CD8-positive, alpha-beta T cell (primary cell): ENCODE measurements at regions of chr16 and their contacts with region 1.

Region 1: DNA sequence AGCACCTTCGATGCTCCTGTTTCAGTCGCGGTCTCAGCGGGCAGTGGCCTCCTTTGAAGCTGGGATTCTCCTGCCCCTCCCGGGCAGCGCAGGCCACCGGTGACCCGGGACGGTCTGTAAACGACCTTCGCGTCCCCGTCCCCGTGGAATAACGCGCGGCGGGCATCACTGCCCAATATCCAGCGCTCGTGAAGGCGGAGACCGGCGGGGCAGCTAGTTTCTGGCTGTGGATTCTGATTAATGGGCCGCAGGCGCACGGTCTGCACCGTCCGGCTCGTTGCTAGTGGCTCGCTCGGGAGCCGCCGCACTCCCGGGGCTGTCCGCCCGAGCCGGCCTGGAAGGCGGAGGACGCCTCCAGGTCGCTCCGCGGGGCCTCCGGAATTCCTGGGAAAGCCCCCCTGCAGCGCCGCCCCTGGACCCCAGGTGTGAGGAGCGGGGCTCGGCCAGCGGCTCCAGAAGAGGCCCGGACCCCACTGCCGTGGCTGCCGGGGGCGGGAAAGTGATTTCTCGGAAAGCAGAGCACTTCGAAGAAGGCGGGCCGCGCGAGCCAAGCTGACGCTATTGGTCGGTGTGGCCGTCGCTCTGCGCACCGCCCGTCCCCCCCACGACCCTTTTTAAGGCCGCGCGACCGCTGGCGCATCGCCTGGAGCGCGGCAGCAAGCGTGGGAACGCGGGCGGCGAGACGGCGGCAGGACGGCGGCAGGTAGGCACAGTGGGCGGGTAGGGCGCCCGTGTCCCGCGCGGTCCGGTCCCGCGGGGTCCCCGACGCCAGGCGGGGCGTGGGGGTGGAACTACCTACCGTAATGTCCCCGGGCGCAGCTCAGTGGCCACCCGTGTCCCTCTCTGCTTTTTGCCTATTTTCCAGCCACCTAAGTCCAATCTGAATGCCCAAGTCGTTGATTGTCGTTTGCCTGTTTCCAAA is at the start of gene IRF8:
- DNase-seq: peak; percentile 35 to 89 (median 73)
- ATAC-seq: peak; percentile 77
- H3K4me3 ChIP-seq: peak within 1 kb of the TSS; percentile 54 to 66
- H3K4me3 Mint-ChIP-seq: peak within 1 kb of the TSS; percentile 83
- H3K27ac ChIP-seq: no peak within 1 kb of the TSS
- H3K27ac Mint-ChIP-seq: no peak within 1 kb of the TSS
- H3K4me1 ChIP-seq: peaks cover 35% of the 10 kb centered on the region
- H3K4me1 Mint-ChIP-seq: peaks cover 47% of the 10 kb centered on the region
- H3K27me3 ChIP-seq: peaks cover 0 to 2% of the 10 kb centered on the region in 2 experiments
- H3K27me3 Mint-ChIP-seq: no peaks in the 10 kb centered on the region
- CTCF ChIP-seq: no peak
- total RNA-seq, gene IRF8: 23.0 to 25.5 TPM

Region 2: GRCh38 chr16:84498859-84499620 is 1399.7 kb before region 1 on chr16:
- CTCF ChIA-PET with region 1: no interaction called
- POLR2A ChIA-PET with region 1: no interaction called
- intact Hi-C with region 1: loop called in 1 of 2 experiments (anchors 5 kb)
- DNase-seq: no peak
- ATAC-seq: no peak
- H3K4me3 ChIP-seq: no peak overlapping the region
- H3K4me3 Mint-ChIP-seq: no peak overlapping the region
- H3K27ac ChIP-seq: no peak overlapping the region
- H3K27ac Mint-ChIP-seq: no peak overlapping the region
- H3K4me1 ChIP-seq: peaks cover 5% of the 10 kb centered on the region
- H3K4me1 Mint-ChIP-seq: peaks cover 13% of the 10 kb centered on the region
- H3K27me3 ChIP-seq: no peaks in the 10 kb centered on the region
- H3K27me3 Mint-ChIP-seq: no peaks in the 10 kb centered on the region
- CTCF ChIP-seq: no peak

Region 3: DNA sequence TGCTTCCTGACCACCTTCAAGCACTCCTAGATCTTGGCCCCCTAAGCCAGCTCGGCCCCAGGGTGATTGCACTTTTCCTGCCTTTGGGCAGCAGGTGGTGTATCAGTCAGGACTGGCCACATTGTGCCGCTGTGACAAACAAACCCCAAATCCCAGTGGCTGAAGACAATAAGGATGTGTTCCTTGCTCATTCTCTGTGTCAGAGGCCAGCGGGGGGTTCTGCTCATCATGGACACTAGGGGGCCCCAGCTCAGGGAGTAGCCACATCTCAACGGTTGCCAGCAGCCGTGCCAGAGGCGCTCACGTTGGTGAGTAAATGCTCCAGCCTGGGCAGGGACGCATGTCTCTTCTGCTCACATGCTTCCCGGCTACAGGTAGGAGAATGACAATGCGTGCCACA is 947.9 kb before region 1 on chr16:
- CTCF ChIA-PET with region 1: no interaction called
- POLR2A ChIA-PET with region 1: no interaction called
- intact Hi-C with region 1: no loop called
- DNase-seq: peak in 5 of 9 experiments; percentile 23 to 50 (median 32)
- ATAC-seq: no peak
- H3K4me3 ChIP-seq: no peak overlapping the region
- H3K4me3 Mint-ChIP-seq: no peak overlapping the region
- H3K27ac ChIP-seq: no peak overlapping the region
- H3K27ac Mint-ChIP-seq: no peak overlapping the region
- H3K4me1 ChIP-seq: peaks cover 16% of the 10 kb centered on the region
- H3K4me1 Mint-ChIP-seq: peaks cover 12% of the 10 kb centered on the region
- H3K27me3 ChIP-seq: peaks cover 0 to 4% of the 10 kb centered on the region in 2 experiments
- H3K27me3 Mint-ChIP-seq: peaks cover 2% of the 10 kb centered on the region
- CTCF ChIP-seq: no peak

Region 4: GRCh38 chr16:85935974-85936760 is 37.4 kb after region 1 on chr16:
- CTCF ChIA-PET with region 1: interaction called, 3 read pairs
- POLR2A ChIA-PET with region 1: interaction called, 4 read pairs
- intact Hi-C with region 1: loop called (anchors 2 kb)
- DNase-seq: peak; percentile 39 to 92 (median 71)
- ATAC-seq: peak; percentile 86
- H3K4me3 ChIP-seq: peak overlapping the region; percentile 25 to 43
- H3K4me3 Mint-ChIP-seq: peak overlapping the region; percentile 70
- H3K27ac ChIP-seq: peak overlapping the region; percentile 64 to 74
- H3K27ac Mint-ChIP-seq: peak overlapping the region; percentile 92
- H3K4me1 ChIP-seq: peaks cover 34% of the 10 kb centered on the region
- H3K4me1 Mint-ChIP-seq: peaks cover 39% of the 10 kb centered on the region
- H3K27me3 ChIP-seq: no peaks in the 10 kb centered on the region
- H3K27me3 Mint-ChIP-seq: no peaks in the 10 kb centered on the region
- CTCF ChIP-seq: no peak

Region 5: GRCh38 chr16:85986931-85987749 is 88.4 kb after region 1 on chr16:
- CTCF ChIA-PET with region 1: interaction called, 10 read pairs
- POLR2A ChIA-PET with region 1: no interaction called
- intact Hi-C with region 1: no loop called
- DNase-seq: peak in 8 of 9 experiments; percentile 9 to 72 (median 43)
- ATAC-seq: no peak
- H3K4me3 ChIP-seq: no peak overlapping the region
- H3K4me3 Mint-ChIP-seq: no peak overlapping the region
- H3K27ac ChIP-seq: no peak overlapping the region
- H3K27ac Mint-ChIP-seq: no peak overlapping the region
- H3K4me1 ChIP-seq: no peaks in the 10 kb centered on the region
- H3K4me1 Mint-ChIP-seq: peaks cover 20% of the 10 kb centered on the region
- H3K27me3 ChIP-seq: no peaks in the 10 kb centered on the region
- H3K27me3 Mint-ChIP-seq: peaks cover 12% of the 10 kb centered on the region
- CTCF ChIP-seq: peak; percentile 66